Activated T-helper 2 cell treated with anti-CD3 and anti-CD28 coated beads, Interferon-gamma antibody, Interleukin-2, Interleukin-4, amounts not matched to agents 10 μg/mL and 5 μg/mL and 100 μg/mL, durations not matched to agents 14 hours and 24 hours and 36 hours (primary cell): ENCODE measurements at regions of chr1 and their contacts with region 1.

Region 1: DNA sequence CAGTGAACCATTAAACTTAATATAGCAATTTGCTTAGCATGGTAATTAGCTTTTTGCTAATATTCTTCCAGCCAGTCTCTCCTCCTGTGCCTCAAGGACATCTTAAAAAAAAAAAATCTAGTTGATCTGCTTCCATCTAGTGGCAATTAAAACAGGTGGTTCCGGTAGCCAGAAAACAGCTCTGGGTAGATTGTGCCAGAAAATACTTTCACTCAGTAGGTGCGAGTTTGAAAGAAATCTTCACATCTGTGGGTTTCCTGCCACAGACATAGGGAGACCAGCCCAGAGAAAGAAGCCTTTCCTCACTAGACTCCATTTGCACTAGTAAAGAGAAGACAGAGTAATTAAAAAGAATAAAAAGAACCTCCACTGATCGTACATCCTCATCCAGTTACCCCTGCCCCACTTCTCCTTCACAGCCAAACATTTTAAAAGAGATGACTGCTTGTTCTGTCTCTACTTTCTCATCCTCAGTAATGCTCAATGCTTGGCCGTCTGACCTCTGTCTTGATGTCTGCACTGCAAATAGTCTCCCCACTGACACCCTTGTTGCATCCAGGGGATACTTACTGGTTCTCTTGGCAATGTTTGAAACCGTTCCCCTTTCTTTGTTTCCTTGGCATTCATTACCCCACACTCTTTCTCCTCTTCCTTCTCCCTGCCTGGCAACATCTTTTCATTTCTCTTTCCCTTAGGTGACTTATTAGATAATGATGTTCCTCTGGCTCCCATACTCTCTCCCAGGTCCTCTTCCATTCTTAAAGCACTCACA is 16.9 kb downstream of the SELL start:
- DNase-seq: peak; percentile 55
- H3K4me3 Mint-ChIP-seq: peak overlapping the region; percentile 28
- H3K27ac Mint-ChIP-seq: peak overlapping the region; percentile 84
- H3K4me1 Mint-ChIP-seq: peaks cover 94% of the 10 kb centered on the region
- H3K27me3 Mint-ChIP-seq: no peaks in the 10 kb centered on the region

Region 2: DNA sequence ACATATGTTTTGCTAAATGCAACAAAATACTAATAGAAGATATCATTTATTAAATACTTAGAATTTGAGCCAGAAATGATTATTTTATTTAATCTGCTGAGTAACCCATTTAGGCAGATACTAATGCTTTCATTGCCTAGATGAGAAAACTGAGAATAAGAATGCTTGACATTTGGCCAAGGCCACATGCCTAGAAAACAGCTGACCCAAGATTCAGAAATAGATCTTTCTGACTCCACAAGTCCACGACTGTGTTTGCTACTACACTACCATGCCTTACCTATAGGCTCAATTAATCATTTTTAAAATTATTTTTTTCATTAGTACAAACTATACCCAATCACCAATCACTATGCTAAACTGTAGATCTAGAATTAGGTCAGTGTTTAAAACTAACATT is 458.3 kb before region 1 on chr1:
- intact Hi-C with region 1: no loop called
- DNase-seq: no peak
- H3K4me3 Mint-ChIP-seq: no peak overlapping the region
- H3K27ac Mint-ChIP-seq: no peak overlapping the region
- H3K4me1 Mint-ChIP-seq: peaks cover 9% of the 10 kb centered on the region
- H3K27me3 Mint-ChIP-seq: no peaks in the 10 kb centered on the region

Region 3: GRCh38 chr1:169485544-169486278 is 208.8 kb before region 1 on chr1 and contains the start of gene SLC19A2:
- intact Hi-C with region 1: loop called (anchors 2 kb)
- DNase-seq: peak; percentile 94
- H3K4me3 Mint-ChIP-seq: peak within 1 kb of the TSS; percentile 89
- H3K27ac Mint-ChIP-seq: peak within 1 kb of the TSS; percentile 90
- H3K4me1 Mint-ChIP-seq: peaks cover 59% of the 10 kb centered on the region
- H3K27me3 Mint-ChIP-seq: no peaks in the 10 kb centered on the region
- total RNA-seq, gene SLC19A2: 11.2 and 11.9 TPM in 2 replicates

Region 4: GRCh38 chr1:169601093-169601881 is 93.2 kb before region 1 on chr1:
- intact Hi-C with region 1: loop called (anchors 1 kb)
- DNase-seq: no peak
- H3K4me3 Mint-ChIP-seq: no peak overlapping the region
- H3K27ac Mint-ChIP-seq: no peak overlapping the region
- H3K4me1 Mint-ChIP-seq: peaks cover 42% of the 10 kb centered on the region
- H3K27me3 Mint-ChIP-seq: no peaks in the 10 kb centered on the region

Region 5: DNA sequence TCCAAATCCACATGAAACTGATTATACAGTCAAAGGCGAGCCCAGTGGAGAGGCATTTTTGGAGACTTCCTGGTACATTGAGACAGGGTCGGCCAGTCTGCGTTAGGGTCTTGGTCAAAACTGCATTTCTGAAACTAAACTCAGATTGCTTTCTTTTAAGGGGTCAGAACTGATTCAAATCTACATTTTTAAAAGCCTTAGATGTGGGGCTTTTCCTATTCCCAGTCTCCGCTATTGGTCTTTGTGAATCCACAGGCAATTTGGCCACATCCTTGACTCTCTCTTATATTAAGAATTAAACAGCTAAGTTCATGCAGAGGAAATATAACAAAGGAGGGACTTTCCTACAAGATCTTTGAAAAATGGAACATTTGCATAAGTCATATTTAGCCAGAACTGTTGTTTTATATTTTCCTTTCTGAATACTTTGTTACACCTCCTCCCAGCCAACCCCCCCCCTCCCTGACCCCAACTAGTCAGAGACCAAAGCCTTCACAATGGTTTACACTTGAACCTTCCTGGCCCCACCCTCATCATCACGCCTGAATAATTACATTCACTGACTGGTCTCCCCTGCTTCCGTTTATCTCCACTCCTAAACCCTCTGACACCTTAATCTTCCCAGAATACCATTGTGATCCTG is 14.0 kb before region 1 on chr1:
- intact Hi-C with region 1: loop called (anchors 1 kb)
- DNase-seq: no peak
- H3K4me3 Mint-ChIP-seq: no peak overlapping the region
- H3K27ac Mint-ChIP-seq: peak overlapping the region; percentile 73
- H3K4me1 Mint-ChIP-seq: peaks cover 58% of the 10 kb centered on the region
- H3K27me3 Mint-ChIP-seq: no peaks in the 10 kb centered on the region

Region 6: GRCh38 chr1:169794530-169795416 is 100.3 kb after region 1 on chr1 and contains the start of gene METTL18:
- intact Hi-C with region 1: loop called (anchors 5 kb)
- DNase-seq: peak; percentile 92
- H3K4me3 Mint-ChIP-seq: peak within 1 kb of the TSS; percentile 92
- H3K27ac Mint-ChIP-seq: peak within 1 kb of the TSS; percentile 98
- H3K4me1 Mint-ChIP-seq: peaks cover 51% of the 10 kb centered on the region
- H3K27me3 Mint-ChIP-seq: no peaks in the 10 kb centered on the region
- total RNA-seq, gene METTL18: 8.9 and 10.9 TPM in 2 replicates

Region 7: DNA sequence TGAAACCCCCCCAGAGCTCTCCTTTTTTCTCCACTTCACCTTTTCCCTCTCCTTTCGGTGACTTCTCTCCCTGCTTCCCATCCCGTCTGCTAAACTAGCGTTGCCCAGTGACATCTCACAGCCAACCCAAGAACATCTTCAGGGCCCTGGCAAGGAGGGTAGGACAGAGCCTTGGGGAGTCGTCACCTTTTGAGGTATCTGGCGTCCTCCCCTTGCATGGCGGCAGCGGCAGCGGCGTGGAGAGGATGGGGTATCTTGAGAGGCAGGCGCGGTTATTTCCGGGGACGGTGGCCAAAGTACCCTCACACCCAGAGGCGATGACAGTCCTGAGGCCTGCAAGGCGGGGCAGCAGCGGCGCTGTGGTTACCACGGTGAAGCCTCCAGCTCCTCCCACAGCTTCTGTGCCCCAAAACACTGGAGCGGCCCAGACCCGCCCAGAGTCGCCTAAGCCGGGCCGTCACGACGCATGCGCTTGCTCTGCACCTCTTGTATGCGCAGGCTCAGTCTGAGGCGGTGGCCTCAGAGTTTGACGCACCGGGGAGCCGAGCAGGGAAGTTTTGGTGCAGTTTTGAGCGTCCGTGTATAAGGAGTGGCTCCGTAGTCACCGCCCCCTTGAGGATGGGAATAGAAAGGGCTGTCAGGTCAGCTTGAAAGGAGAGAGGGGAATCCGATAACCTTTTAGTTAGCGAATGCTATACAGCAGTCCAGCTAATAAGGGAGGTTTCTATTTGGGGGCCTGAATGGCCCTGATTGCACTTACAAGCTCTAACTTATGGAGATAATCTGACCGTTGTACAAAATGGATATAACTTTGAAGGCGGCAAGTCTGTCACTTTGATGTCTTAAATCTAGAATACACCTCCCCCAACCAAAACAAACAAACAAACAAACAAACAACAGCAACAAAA is 380.0 kb after region 1 on chr1 and contains the start of gene KIFAP3:
- intact Hi-C with region 1: loop called (anchors 10 kb)
- DNase-seq: peak; percentile 96
- H3K4me3 Mint-ChIP-seq: peak within 1 kb of the TSS; percentile 96
- H3K27ac Mint-ChIP-seq: peak within 1 kb of the TSS; percentile 94
- H3K4me1 Mint-ChIP-seq: peaks cover 28% of the 10 kb centered on the region
- H3K27me3 Mint-ChIP-seq: no peaks in the 10 kb centered on the region
- total RNA-seq, gene KIFAP3: 15.1 and 15.5 TPM in 2 replicates